Activated CD8-positive, alpha-beta memory T cell treated with anti-CD3 and anti-CD28 coated beads, Interleukin-2, amount 10 ng/mL, durations not matched to agents 7 days and 5 days (primary cell): ENCODE measurements at regions of chr17 and their contacts with region 1.

Region 1: GRCh38 chr17:30363715-30364202 is 15.0 kb upstream of the CPD start:
- DNase-seq: peak; percentile 95
- ATAC-seq: peak; percentile 89
- H3K4me3 Mint-ChIP-seq: peak overlapping the region; percentile 29
- H3K27ac Mint-ChIP-seq: peak overlapping the region; percentile 92
- H3K4me1 Mint-ChIP-seq: peaks cover 27% of the 10 kb centered on the region
- H3K27me3 Mint-ChIP-seq: peaks cover 7% of the 10 kb centered on the region

Region 2: GRCh38 chr17:30378824-30379302 is 15.1 kb after region 1 on chr17 and contains the start of gene CPD:
- CTCF ChIA-PET with region 1: interaction called, 10 read pairs
- DNase-seq: peak; percentile 97
- ATAC-seq: peak; percentile 89
- H3K4me3 Mint-ChIP-seq: peak within 1 kb of the TSS; percentile 84
- H3K27ac Mint-ChIP-seq: peak within 1 kb of the TSS; percentile 82
- H3K4me1 Mint-ChIP-seq: peaks cover 54% of the 10 kb centered on the region
- H3K27me3 Mint-ChIP-seq: peaks cover 4% of the 10 kb centered on the region
- total RNA-seq, gene CPD: 19.9 to 25.6 TPM